K562 (cell line): ENCODE measurements at regions of chr10 and their contacts with region 1.

Region 1: GRCh38 chr10:13099666-13100348 is at the start of gene OPTN:
- DNase-seq: peak; percentile 78 to 95 (median 92)
- ATAC-seq: peak; percentile 82
- H3K4me3 ChIP-seq: peak within 1 kb of the TSS; percentile 61
- H3K27ac ChIP-seq: peak within 1 kb of the TSS; percentile 43; the same call in 2 of the 3 replicates
- H3K4me1 ChIP-seq: peaks cover 10 to 12% of the 10 kb centered on the region in 2 experiments; a peak in 4 of 5 replicates
- H3K27me3 ChIP-seq: no peaks in the 10 kb centered on the region
- CTCF ChIP-seq: peak; percentile 73 to 89 (median 88)
- EP300 ChIP-seq: no peak
- POLR2A ChIP-seq: no peak
- RAD21 ChIP-seq: peak; percentile 56 to 78
- polyA plus RNA-seq, gene OPTN: 2.2 to 2.4 TPM

Region 2: DNA sequence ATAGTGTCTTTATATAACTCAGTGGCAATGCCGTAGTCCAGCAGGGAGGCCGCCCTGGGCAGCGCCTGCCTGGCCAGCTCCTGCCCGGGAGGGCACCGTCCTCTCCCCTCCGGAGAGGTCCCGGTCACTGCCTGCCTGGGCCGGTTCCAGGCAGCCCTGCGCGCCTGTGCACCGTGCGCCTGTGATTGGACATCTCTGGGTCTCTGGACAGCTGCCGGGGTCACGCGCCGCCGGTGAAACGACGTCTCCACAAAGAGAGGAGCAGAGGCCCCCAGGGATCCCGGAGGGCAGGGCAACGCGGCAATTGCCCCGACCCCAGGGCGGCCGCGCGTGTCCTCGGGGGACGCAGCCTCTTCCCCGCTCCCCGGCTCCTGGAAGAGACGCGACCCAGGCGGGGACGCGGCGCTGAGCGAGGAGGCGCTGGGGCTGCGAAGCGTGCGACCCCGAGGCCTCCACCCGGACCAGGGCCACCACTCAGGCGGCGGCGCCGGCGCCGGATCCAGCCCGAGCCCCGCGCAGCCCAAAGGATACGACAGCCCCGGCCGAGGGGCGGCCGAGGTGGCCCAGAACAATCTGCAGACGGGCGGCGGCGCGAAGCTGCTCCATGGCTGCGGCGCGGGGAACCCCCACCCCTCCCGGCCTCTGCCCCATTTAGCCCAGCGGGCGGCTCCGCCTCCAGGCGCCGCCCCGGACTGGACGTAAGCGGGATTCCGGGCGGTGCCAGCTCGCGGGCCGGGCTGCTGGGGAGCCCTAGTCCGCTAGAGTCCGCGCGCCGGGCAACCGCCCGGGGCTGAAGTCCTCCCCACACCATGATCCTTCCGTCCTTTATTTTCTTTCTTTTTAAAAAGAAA is 199.9 kb after region 1 on chr10 and contains the start of gene PHYH:
- CTCF ChIA-PET with region 1: no interaction called
- POLR2A ChIA-PET with region 1: interaction called, 3 read pairs
- in situ Hi-C with region 1: no loop called
- intact Hi-C with region 1: loop called (anchors 10 kb)
- DNase-seq: peak; percentile 83 to 90 (median 88)
- ATAC-seq: peak; percentile 89
- H3K4me3 ChIP-seq: peak within 1 kb of the TSS; percentile 58
- H3K27ac ChIP-seq: peak within 1 kb of the TSS; percentile 69
- H3K4me1 ChIP-seq: peaks cover 8 to 32% of the 10 kb centered on the region in 2 experiments; a peak in 3 of 5 replicates
- H3K27me3 ChIP-seq: no peaks in the 10 kb centered on the region
- CTCF ChIP-seq: no peak
- EP300 ChIP-seq: no peak; the same call in 1 of the 2 replicates
- POLR2A ChIP-seq: peak; percentile 69
- RAD21 ChIP-seq: no peak
- polyA plus RNA-seq, gene PHYH: 6.3 to 6.9 TPM

Region 3: GRCh38 chr10:13349463-13350274 is 249.9 kb after region 1 on chr10:
- CTCF ChIA-PET with region 1: no interaction called
- POLR2A ChIA-PET with region 1: no interaction called
- in situ Hi-C with region 1: no loop called
- intact Hi-C with region 1: loop called (anchors 10 kb)
- DNase-seq: peak; percentile 27 to 41 (median 32)
- ATAC-seq: peak; percentile 7; the same call in 2 of the 3 replicates
- H3K4me3 ChIP-seq: no peak overlapping the region
- H3K27ac ChIP-seq: no peak overlapping the region
- H3K4me1 ChIP-seq: peaks cover 13 to 17% of the 10 kb centered on the region in 2 experiments
- H3K27me3 ChIP-seq: peaks cover 0 to 6% of the 10 kb centered on the region in 2 experiments; a peak in 3 of 5 replicates
- CTCF ChIP-seq: no peak
- EP300 ChIP-seq: no peak
- POLR2A ChIP-seq: no peak
- RAD21 ChIP-seq: no peak

Region 4: DNA sequence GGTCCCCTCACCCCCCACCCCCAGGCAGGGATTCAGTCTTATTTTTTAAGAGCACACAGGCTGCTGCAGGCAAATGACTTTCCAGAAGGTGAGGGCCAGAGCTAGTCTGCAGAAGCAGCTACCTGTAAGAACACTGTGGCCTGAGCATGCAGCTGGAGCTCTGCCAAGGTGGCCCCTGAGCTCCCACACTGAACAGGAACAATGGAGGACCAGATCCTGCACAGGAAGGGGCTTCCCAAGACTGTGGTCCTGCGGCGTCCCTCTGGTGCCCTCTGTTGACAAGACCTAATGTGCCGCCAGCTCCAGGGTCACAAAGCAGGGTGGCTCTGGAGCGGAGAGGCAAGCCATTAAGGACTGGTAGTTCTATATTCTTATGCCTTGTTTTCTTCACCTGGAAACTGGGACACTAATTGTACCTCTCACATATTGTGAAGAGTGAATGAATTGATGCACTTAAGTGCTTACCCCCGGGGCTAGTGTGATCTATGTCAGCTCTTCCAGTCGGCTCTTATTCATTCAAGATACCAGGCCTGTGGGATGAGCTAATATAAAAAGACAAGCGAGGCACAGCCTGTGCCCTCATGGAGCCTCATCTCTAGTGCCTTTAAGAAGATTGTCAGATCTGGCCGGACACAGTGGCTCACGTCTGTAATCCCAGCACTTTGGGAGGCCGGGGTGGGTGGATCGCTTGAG is 437.0 kb after region 1 on chr10:
- CTCF ChIA-PET with region 1: no interaction called
- POLR2A ChIA-PET with region 1: no interaction called
- in situ Hi-C with region 1: no loop called
- intact Hi-C with region 1: loop called (anchors 10 kb)
- DNase-seq: peak; percentile 39 to 70 (median 56)
- ATAC-seq: peak; percentile 97
- H3K4me3 ChIP-seq: no peak overlapping the region
- H3K27ac ChIP-seq: no peak overlapping the region
- H3K4me1 ChIP-seq: no peaks in the 10 kb centered on the region; a peak in 2 of 5 replicates
- H3K27me3 ChIP-seq: peaks cover 17 to 25% of the 10 kb centered on the region in 2 experiments
- CTCF ChIP-seq: peak; percentile 75 to 84 (median 77)
- EP300 ChIP-seq: no peak
- POLR2A ChIP-seq: no peak
- RAD21 ChIP-seq: peak; percentile 33 to 78; a peak in 3 of 4 replicates